ENCODE measurements at regions of chr1 and their contacts with region 1.

Region 1: GRCh38 chr1:29793101-29793546 is 556.8 kb downstream of the PTPRU start:
- DNase-seq: peak; percentile 74
- H3K4me3 ChIP-seq: no peak overlapping the region; a peak in 1 of 4 replicates
- H3K27ac ChIP-seq: no peak overlapping the region
- H3K4me1 ChIP-seq: peaks cover 0 to 12% of the 10 kb centered on the region in 2 experiments; a peak in 1 of 4 replicates
- H3K27me3 ChIP-seq: no peaks in the 10 kb centered on the region
- CTCF ChIP-seq: peak; percentile 78
- EP300 ChIP-seq: no peak
- RAD21 ChIP-seq: peak; percentile 96

Region 2: GRCh38 chr1:29688471-29689365 is 104.4 kb before region 1 on chr1:
- CTCF ChIA-PET with region 1: interaction called, 16 read pairs
- POLR2A ChIA-PET with region 1: no interaction called
- DNase-seq: no peak
- H3K4me3 ChIP-seq: no peak overlapping the region
- H3K27ac ChIP-seq: peak overlapping the region; percentile 53 to 93
- H3K4me1 ChIP-seq: peaks cover 13 to 74% of the 10 kb centered on the region in 2 experiments
- H3K27me3 ChIP-seq: no peaks in the 10 kb centered on the region
- CTCF ChIP-seq: no peak
- EP300 ChIP-seq: no peak
- RAD21 ChIP-seq: no peak

Region 3: GRCh38 chr1:29758781-29759499 is 34.2 kb before region 1 on chr1:
- CTCF ChIA-PET with region 1: interaction called, 13 read pairs
- POLR2A ChIA-PET with region 1: no interaction called
- DNase-seq: no peak
- H3K4me3 ChIP-seq: no peak overlapping the region
- H3K27ac ChIP-seq: no peak overlapping the region
- H3K4me1 ChIP-seq: peaks cover 0 to 37% of the 10 kb centered on the region in 2 experiments; a peak in 1 of 4 replicates
- H3K27me3 ChIP-seq: no peaks in the 10 kb centered on the region
- CTCF ChIP-seq: no peak
- EP300 ChIP-seq: no peak
- RAD21 ChIP-seq: no peak

Region 4: DNA sequence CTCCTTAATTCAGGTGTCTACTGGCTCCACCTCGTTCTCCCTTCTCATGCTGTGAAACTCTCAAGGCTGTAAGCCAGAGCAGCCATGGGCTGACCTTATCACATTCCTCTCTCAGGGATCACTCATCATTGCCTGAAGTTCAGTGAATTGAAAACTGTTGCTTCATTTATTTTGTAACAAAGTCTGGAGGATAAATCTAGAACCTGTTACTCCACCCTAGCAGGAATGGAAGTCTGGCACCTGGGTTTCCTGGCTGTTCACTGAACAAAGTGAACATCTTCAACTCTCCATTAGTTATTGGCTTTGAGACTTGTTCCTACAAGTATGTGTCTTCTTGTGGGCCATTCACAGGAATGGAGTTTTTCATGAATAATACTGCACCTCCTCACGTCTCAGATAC is 27.3 kb after region 1 on chr1:
- CTCF ChIA-PET with region 1: no interaction called
- POLR2A ChIA-PET with region 1: no interaction called
- DNase-seq: no peak
- H3K4me3 ChIP-seq: no peak overlapping the region
- H3K27ac ChIP-seq: no peak overlapping the region
- H3K4me1 ChIP-seq: peaks cover 0 to 6% of the 10 kb centered on the region in 2 experiments; a peak in 1 of 4 replicates
- H3K27me3 ChIP-seq: no peaks in the 10 kb centered on the region
- CTCF ChIP-seq: no peak
- EP300 ChIP-seq: no peak
- RAD21 ChIP-seq: no peak

Region 5: DNA sequence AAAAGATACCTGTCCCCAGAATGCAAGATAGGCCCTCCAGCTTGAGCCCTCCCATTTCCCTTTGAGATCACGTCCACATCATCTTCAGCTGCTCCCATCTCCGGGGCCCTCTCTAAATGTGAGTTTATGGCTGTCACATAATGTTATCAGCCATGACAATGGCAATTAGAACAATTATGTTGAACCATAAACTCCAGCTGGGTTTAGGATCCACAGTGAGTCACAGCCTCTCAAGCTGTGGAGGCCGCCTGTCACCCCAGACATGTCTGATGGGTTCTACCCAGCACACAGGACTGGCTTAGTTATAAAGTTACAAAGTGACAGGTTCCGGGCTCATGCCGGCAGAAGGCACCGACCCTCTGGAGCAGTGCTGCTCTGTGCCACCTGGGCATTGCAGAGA is 40.5 kb after region 1 on chr1:
- CTCF ChIA-PET with region 1: interaction called, 24 read pairs
- POLR2A ChIA-PET with region 1: no interaction called
- DNase-seq: no peak
- H3K4me3 ChIP-seq: no peak overlapping the region
- H3K27ac ChIP-seq: no peak overlapping the region
- H3K4me1 ChIP-seq: peaks cover 0 to 51% of the 10 kb centered on the region in 2 experiments; a peak in 2 of 4 replicates
- H3K27me3 ChIP-seq: no peaks in the 10 kb centered on the region
- CTCF ChIP-seq: no peak
- EP300 ChIP-seq: no peak
- RAD21 ChIP-seq: no peak

Region 6: GRCh38 chr1:29849038-29849750 is 56.1 kb after region 1 on chr1:
- CTCF ChIA-PET with region 1: interaction called, 58 read pairs
- POLR2A ChIA-PET with region 1: no interaction called
- DNase-seq: peak; percentile 45
- H3K4me3 ChIP-seq: peak overlapping the region in 1 of 2 experiments; percentile 3; a peak in 1 of 4 replicates
- H3K27ac ChIP-seq: no peak overlapping the region
- H3K4me1 ChIP-seq: no peaks in the 10 kb centered on the region; a peak in 1 of 4 replicates
- H3K27me3 ChIP-seq: no peaks in the 10 kb centered on the region
- CTCF ChIP-seq: peak; percentile 46; the same call in 1 of the 2 replicates
- EP300 ChIP-seq: no peak
- RAD21 ChIP-seq: peak; percentile 68

Region 7: GRCh38 chr1:29856340-29857114 is 63.4 kb after region 1 on chr1:
- CTCF ChIA-PET with region 1: interaction called, 21 read pairs
- POLR2A ChIA-PET with region 1: no interaction called
- DNase-seq: peak; percentile 32
- H3K4me3 ChIP-seq: no peak overlapping the region
- H3K27ac ChIP-seq: no peak overlapping the region
- H3K4me1 ChIP-seq: peaks cover 2% of the 10 kb centered on the region in 2 experiments; a peak in 2 of 4 replicates
- H3K27me3 ChIP-seq: no peaks in the 10 kb centered on the region
- CTCF ChIP-seq: no peak
- EP300 ChIP-seq: no peak
- RAD21 ChIP-seq: no peak

Region 8: DNA sequence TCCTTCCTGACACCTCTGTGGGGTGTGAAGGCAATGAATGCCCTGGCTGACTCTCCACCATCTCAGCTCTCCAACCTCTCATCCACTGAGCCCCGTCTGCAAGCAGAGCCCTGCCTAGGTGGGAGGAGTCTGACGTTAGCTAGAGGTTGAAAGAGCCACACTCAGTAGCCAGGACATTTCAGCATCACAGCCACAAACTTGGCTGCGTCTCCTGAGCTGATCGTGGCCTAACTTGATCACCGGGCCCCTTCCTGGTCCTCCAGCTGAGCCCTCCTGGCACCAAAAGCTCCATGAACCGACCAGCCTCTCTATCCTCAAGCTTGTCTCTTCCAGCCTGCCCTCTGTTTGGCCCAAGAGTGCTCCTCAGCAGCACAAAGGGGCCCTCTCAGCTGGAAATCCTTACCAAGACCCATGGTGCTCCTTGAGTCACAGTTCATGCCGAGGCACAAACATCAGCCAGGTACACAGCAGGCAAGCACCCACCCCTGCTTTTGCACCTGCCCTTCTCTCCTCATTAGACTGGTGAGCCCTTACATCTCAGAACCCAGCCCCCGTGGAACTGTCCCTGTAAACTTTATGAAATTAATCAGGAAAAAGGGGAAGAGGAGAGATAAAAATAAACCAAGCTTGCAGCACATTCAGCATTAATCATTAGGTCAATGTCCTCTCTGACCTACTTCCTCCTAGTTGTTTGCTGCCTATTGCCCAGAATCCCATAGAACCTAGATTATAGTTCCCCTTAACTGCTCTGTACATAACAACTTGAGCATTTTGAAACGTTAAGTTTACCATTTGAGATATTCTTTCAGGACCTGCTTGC is 191.6 kb after region 1 on chr1:
- CTCF ChIA-PET with region 1: no interaction called
- POLR2A ChIA-PET with region 1: no interaction called
- DNase-seq: no peak
- H3K4me3 ChIP-seq: no peak overlapping the region
- H3K27ac ChIP-seq: no peak overlapping the region
- H3K4me1 ChIP-seq: no peaks in the 10 kb centered on the region; a peak in 1 of 4 replicates
- H3K27me3 ChIP-seq: no peaks in the 10 kb centered on the region
- CTCF ChIP-seq: no peak
- EP300 ChIP-seq: no peak
- RAD21 ChIP-seq: no peak

Region 9: DNA sequence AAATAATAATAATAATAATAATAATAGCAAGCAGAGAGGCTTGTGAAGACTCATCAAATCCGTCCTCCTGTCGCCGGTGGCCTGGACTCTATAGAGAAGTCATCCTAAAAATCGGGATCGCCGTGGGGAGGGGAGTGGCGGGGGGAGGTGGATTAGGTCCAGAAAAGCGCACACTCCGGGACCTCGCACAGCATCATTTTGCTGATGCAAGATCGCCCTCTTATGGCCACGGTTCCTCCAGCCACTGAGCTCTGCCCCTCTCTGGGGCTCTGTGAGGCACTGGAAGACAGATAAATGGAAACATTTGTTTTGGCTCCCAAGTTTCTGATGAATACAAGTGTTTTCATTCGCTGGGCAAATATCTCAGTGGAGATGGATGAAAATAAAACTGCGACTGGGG is 318.3 kb after region 1 on chr1:
- CTCF ChIA-PET with region 1: interaction called, 14 read pairs
- POLR2A ChIA-PET with region 1: no interaction called
- DNase-seq: peak; percentile 76
- H3K4me3 ChIP-seq: no peak overlapping the region
- H3K27ac ChIP-seq: no peak overlapping the region
- H3K4me1 ChIP-seq: peaks cover 0 to 23% of the 10 kb centered on the region in 2 experiments; a peak in 3 of 4 replicates
- H3K27me3 ChIP-seq: no peaks in the 10 kb centered on the region
- CTCF ChIP-seq: peak; percentile 63
- EP300 ChIP-seq: no peak
- RAD21 ChIP-seq: peak; percentile 87

Measured in SK-N-SH (cell line).